ENCODE measurements at regions of chr1 and their contacts with region 1.

Region 1: GRCh38 chr1:231612393-231613089 is 14.0 kb upstream of the DISC1 start:
- DNase-seq: peak; percentile 20 to 79 (median 67)
- ATAC-seq: peak; percentile 96
- H3K4me3 ChIP-seq: peak overlapping the region; percentile 34
- H3K4me3 Mint-ChIP-seq: peak overlapping the region; percentile 56 to 82 (median 74)
- H3K27ac ChIP-seq: peak overlapping the region; percentile 59
- H3K27ac Mint-ChIP-seq: peak overlapping the region; percentile 79 to 94 (median 90)
- H3K4me1 ChIP-seq: peaks cover 41 to 45% of the 10 kb centered on the region in 2 donors
- H3K4me1 Mint-ChIP-seq: peaks cover 53 to 70% (median 63%) of the 10 kb centered on the region in 7 donors
- H3K27me3 ChIP-seq: no peaks in the 10 kb centered on the region
- H3K27me3 Mint-ChIP-seq: peaks cover 0 to 14% (median 0%) of the 10 kb centered on the region in 5 donors

Region 2: DNA sequence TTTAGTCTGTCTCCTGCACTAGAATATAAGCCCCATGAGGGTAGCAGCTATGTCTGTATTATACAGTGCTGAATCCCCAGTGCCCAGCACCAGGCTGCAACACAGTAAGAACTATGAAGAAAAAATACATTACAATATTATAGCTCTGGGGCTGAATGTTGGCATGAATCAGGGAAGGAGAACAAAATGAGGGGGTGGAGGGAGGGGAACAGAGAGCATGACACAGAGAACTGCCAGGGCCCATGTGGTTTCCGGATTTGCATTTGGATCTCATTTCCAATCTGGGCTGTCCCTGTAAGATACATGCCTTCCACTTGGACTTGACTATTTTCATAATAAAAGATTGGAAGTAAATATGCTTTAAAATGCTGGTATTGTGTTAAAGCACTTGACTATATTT is 780.1 kb before region 1 on chr1:
- CTCF ChIA-PET with region 1: no interaction called
- POLR2A ChIA-PET with region 1: no interaction called
- intact Hi-C with region 1: no loop called
- DNase-seq: no peak
- ATAC-seq: no peak
- H3K4me3 ChIP-seq: no peak overlapping the region
- H3K4me3 Mint-ChIP-seq: no peak overlapping the region
- H3K27ac ChIP-seq: no peak overlapping the region
- H3K27ac Mint-ChIP-seq: no peak overlapping the region
- H3K4me1 ChIP-seq: no peaks in the 10 kb centered on the region
- H3K4me1 Mint-ChIP-seq: no peaks in the 10 kb centered on the region
- H3K27me3 ChIP-seq: no peaks in the 10 kb centered on the region
- H3K27me3 Mint-ChIP-seq: peaks cover 0 to 14% (median 12%) of the 10 kb centered on the region in 5 donors

Region 3: DNA sequence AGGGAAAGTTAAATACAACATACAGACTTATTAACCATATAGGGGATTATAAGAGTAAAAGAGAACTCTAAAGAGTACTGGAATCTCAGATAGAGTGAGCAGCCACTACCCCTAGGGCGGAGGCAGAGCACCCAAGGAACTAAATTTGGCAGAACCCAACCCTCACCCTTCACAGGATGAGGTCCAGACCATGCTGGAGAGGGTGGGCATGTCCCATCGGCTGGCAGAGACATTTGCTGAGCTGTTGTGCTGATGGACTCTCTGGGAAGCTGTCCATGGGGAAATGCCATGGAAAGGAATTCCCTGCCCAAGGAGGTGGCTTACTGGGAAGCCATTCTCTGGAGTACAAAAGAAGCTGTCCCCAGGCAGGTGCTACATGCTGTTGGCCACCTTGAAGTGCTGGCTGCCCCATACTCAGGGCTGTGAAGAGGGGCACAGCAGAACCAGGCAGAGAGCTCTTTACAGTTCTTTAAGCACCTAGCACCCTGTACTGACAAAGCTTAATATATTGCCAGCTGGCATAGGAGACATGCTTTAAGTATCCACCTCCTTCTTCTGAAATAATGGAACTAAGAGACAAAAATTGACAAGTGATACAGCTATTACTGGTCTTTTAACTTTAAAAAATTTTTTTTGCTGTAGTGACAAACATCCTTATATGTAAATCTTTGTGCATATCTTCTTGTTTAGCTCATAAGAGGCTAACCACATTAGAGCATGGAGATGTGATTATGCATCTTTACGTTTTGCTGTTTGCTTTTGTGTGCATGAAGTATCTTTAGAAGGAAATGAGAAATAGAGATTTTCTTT is 54.4 kb before region 1 on chr1:
- CTCF ChIA-PET with region 1: no interaction called
- POLR2A ChIA-PET with region 1: no interaction called
- intact Hi-C with region 1: no loop called
- DNase-seq: no peak
- ATAC-seq: no peak
- H3K4me3 ChIP-seq: no peak overlapping the region
- H3K4me3 Mint-ChIP-seq: no peak overlapping the region
- H3K27ac ChIP-seq: no peak overlapping the region
- H3K27ac Mint-ChIP-seq: peak overlapping the region in 1 of 9 donors; percentile 5
- H3K4me1 ChIP-seq: no peaks in the 10 kb centered on the region
- H3K4me1 Mint-ChIP-seq: peaks cover 10 to 37% (median 26%) of the 10 kb centered on the region in 7 donors
- H3K27me3 ChIP-seq: no peaks in the 10 kb centered on the region
- H3K27me3 Mint-ChIP-seq: no peaks in the 10 kb centered on the region

Region 4: GRCh38 chr1:231626535-231626945 is 14.0 kb after region 1 on chr1 and contains the start of gene DISC1:
- CTCF ChIA-PET with region 1: interaction called, 5 read pairs
- POLR2A ChIA-PET with region 1: interaction called, 11 read pairs
- intact Hi-C with region 1: loop called (anchors 1 kb)
- DNase-seq: peak; percentile 49 to 74 (median 70)
- ATAC-seq: peak; percentile 88
- H3K4me3 ChIP-seq: peak within 1 kb of the TSS; percentile 74
- H3K4me3 Mint-ChIP-seq: peak within 1 kb of the TSS; percentile 88 to 98 (median 94)
- H3K27ac ChIP-seq: peak within 1 kb of the TSS; percentile 60
- H3K27ac Mint-ChIP-seq: peak within 1 kb of the TSS; percentile 77 to 97 (median 92)
- H3K4me1 ChIP-seq: peaks cover 8 to 16% of the 10 kb centered on the region in 2 donors
- H3K4me1 Mint-ChIP-seq: peaks cover 17 to 52% (median 38%) of the 10 kb centered on the region in 7 donors
- H3K27me3 ChIP-seq: no peaks in the 10 kb centered on the region
- H3K27me3 Mint-ChIP-seq: peaks cover 0 to 36% (median 0%) of the 10 kb centered on the region in 5 donors
- total RNA-seq, gene DISC1: 17.1 to 33.8 (median 23.5) TPM

Measured in naive thymus-derived CD4-positive, alpha-beta T cell (primary cell).